ENCODE measurements at regions of chr1 and their contacts with region 1.

Region 1: DNA sequence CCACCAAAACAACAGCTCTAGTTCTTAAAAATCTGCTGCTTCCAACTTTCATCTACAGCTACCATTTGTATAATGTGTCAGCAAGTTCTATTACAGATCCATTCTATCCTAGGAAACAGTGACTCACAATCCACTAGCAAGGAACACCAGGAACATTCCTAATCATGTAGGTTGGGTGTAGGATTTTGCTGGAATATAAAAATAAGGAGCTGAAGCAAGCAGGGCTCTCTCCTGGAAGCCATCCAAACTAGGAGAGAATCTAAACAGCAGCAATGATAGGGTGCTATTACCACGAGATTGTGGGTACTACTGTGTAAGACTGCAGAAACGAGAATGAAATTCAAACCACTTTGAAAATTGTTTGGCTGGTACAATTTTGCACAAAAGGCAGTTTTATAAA is 135.0 kb downstream of the PTPN14 start:
- DNase-seq: no peak
- ATAC-seq: peak; percentile 27 to 71

Region 2: DNA sequence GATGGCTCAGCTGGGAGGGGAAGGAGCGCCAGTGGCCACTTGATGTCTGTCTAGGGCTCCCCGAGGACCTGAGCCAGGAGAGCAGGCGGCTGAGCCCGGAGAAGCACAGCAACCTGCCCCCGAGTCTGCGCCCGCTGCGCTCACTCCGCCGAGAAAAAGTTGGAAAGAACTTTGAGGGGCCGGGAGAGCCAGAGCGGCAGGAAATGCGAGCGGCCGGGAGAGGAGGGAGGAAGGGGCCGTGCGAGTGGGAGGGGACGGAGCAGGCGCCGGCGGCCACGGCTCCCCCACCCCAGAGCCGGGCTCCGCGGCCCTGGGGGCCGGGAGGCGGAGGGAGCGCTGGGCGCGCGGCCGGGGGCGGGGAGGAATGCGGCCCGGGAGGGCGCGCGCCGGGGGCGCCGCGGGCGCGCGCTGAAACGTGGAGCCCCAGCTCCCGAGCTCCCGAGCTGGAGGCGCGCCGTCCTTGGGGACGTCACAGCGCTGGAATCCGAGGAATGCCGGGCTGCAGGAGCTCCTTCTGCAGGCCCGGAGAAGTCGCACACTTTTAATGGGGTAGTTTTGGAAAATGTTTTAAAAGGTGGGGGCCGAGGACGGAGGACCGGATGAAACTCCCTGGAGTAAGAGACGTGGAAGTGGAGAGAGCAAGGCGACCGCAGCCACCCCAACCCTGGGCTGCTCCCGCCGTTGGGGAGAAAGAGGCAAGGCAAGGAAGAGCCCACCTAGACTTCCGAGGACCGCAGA is 135.2 kb after region 1 on chr1 and contains the start of gene PTPN14:
- intact Hi-C with region 1: loop called in 1 of 2 experiments (anchors 5 kb)
- DNase-seq: peak; percentile 90
- ATAC-seq: peak; percentile 93 to 94
- total RNA-seq, gene PTPN14: 17.8 to 22.5 TPM

Measured in left cardiac atrium (tissue), 4 donors.